ENCODE measurements at regions of chr6 and their contacts with region 1.

Region 1: DNA sequence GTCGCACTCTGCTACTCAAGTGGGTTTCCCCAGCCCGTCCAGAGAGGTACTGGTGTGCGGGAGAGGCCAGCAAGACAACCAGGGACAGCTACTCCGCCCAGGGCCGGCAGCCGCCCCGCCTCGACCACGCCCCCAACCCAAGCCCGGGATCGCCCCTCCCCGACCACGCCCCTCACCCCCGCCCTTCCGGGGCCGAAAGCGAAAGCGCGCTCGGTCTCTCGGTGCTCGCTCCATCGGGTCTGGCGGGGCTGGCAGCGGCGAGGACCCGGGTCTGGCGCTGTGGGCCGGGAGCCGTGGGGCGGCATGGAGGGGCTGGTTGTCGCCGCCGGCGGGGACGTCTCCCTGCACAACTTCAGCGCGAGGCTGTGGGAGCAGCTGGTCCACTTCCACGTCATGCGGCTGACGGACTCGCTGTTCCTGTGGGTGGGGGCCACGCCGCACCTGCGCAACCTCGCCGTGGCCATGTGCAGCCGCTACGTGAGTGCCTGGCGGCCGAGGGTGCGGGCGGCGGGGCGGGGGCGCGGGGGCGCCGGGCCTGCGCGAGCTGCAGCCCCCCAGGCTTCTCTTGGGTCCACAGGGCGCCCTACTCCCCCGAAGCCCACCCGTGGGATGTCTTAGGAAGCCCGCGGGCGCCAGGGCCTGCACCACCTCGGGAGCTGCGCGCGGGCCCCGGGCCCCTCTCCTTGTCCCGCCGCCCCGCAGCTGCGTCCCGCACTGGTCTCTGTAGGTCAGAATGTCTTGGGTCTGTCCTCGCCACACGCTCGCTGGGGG is at the start of gene PSMG4:
- DNase-seq: peak; percentile 91
- H3K4me3 Mint-ChIP-seq: peak within 1 kb of the TSS; percentile 99
- H3K27ac Mint-ChIP-seq: peak within 1 kb of the TSS; percentile 95
- H3K4me1 Mint-ChIP-seq: peaks cover 39% of the 10 kb centered on the region
- H3K27me3 Mint-ChIP-seq: peaks cover 11% of the 10 kb centered on the region
- total RNA-seq, gene PSMG4: 32.1 and 35.4 TPM in 2 replicates

Region 2: GRCh38 chr6:2999618-3000557 is 259.0 kb before region 1 on chr6 and contains the start of gene NQO2:
- intact Hi-C with region 1: loop called (anchors 1 kb)
- DNase-seq: peak; percentile 83
- H3K4me3 Mint-ChIP-seq: peak within 1 kb of the TSS; percentile 90
- H3K27ac Mint-ChIP-seq: peak within 1 kb of the TSS; percentile 90
- H3K4me1 Mint-ChIP-seq: peaks cover 38% of the 10 kb centered on the region
- H3K27me3 Mint-ChIP-seq: peaks cover 3% of the 10 kb centered on the region
- total RNA-seq, gene NQO2: 30.2 and 34.8 TPM in 2 replicates

Region 3: GRCh38 chr6:3125815-3126214 is 133.1 kb before region 1 on chr6:
- intact Hi-C with region 1: loop called (anchors 1 kb)
- DNase-seq: no peak
- H3K4me3 Mint-ChIP-seq: no peak overlapping the region
- H3K27ac Mint-ChIP-seq: no peak overlapping the region
- H3K4me1 Mint-ChIP-seq: no peaks in the 10 kb centered on the region
- H3K27me3 Mint-ChIP-seq: no peaks in the 10 kb centered on the region

Region 4: DNA sequence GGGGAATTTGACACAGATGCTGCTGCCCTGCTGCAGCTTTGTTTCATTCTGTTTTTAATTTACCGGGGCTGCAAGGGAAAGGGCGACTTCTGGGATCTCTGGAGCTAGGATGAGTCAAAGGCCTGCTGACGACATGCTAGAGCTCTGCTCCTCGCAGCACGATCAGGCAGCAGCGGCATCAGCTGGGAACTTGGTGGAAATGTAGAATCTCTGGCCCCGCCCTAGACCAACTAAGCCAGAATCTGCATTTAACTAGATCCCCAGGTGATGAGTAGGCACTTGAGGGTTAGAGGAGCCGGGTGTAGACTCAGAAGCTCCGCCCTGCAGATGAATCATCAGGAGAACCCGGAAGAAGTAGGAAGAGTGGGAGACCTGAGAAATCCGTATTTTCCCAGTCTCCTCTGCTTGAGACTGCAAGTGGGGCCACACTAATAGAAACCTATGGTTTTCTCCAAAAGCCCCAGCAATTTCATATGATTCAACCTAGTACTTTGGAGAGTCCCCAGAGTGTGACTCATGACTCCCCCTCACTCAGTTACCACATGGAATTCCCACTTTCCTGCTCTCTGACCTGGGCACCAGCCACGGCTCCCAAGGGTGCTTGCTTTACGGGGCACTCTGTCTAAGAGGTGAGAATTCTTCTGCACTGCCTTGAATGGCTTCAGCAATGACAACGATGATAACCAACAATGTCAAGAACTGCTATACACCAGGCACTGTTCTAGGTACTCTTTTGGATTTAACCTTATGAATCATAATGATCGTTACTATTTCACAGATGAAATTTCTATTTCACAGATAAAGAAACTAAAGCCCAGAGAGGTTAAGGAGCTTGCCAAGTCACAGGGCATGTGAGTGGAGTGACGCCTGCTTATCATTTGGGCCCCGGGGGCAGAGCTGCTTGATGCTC is 49.5 kb before region 1 on chr6:
- intact Hi-C with region 1: loop called (anchors 1 kb)
- DNase-seq: no peak
- H3K4me3 Mint-ChIP-seq: peak overlapping the region; percentile 43
- H3K27ac Mint-ChIP-seq: peak overlapping the region; percentile 89
- H3K4me1 Mint-ChIP-seq: peaks cover 41% of the 10 kb centered on the region
- H3K27me3 Mint-ChIP-seq: peaks cover 23% of the 10 kb centered on the region

Region 5: GRCh38 chr6:3341467-3341866 is 82.6 kb after region 1 on chr6:
- intact Hi-C with region 1: no loop called
- DNase-seq: no peak
- H3K4me3 Mint-ChIP-seq: no peak overlapping the region
- H3K27ac Mint-ChIP-seq: no peak overlapping the region
- H3K4me1 Mint-ChIP-seq: peaks cover 13% of the 10 kb centered on the region
- H3K27me3 Mint-ChIP-seq: peaks cover 10% of the 10 kb centered on the region

Region 6: GRCh38 chr6:3456755-3457466 is 198.0 kb after region 1 on chr6 and contains the start of gene SLC22A23:
- intact Hi-C with region 1: loop called (anchors 1 kb)
- DNase-seq: peak; percentile 42
- H3K4me3 Mint-ChIP-seq: peak within 1 kb of the TSS; percentile 81
- H3K27ac Mint-ChIP-seq: peak within 1 kb of the TSS; percentile 70
- H3K4me1 Mint-ChIP-seq: peaks cover 7% of the 10 kb centered on the region
- H3K27me3 Mint-ChIP-seq: peaks cover 46% of the 10 kb centered on the region
- total RNA-seq, gene SLC22A23: 0.05 and 0.39 TPM in 2 replicates

Region 7: DNA sequence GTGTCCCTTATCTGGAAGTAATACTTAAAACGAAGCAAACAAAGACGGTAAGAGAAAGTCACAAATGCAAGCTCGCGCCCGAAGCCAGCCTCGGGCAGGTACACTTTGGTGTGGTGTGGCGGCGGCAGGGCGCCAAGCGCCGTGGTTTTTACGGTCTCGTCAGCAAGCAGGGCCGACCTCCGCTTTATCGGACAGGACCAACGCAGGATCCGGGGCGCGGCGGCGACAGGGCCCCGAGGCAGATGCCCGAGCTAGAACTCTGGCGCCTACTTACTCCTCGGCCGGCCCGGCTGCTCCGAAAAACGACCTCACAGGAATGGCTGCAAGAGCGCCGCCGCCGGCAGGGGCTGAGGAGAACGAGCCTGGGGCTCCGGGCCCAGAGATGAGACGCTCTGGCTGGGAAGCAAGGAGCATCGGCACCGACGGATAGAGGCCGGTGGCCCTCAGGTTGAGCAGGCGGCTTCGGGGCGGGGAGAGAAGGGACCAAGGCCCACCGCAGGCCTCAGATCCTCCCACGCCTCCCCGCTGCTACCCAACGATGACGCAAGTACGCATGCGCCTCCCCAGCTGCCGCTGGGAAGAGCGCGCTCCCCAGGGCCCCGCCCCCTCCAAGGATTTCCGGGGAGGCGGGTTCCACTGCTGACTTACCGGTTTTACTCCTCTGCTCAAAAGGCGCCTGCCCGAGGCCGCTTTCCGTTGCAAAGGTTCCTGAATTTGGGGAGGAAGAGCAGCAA is 759.4 kb after region 1 on chr6:
- intact Hi-C with region 1: loop called (anchors 2 kb)
- DNase-seq: peak; percentile 96
- H3K4me3 Mint-ChIP-seq: peak overlapping the region; percentile 99
- H3K27ac Mint-ChIP-seq: peak overlapping the region; percentile 100
- H3K4me1 Mint-ChIP-seq: peaks cover 60% of the 10 kb centered on the region
- H3K27me3 Mint-ChIP-seq: no peaks in the 10 kb centered on the region

Measured in activated T-helper 1 cell treated with anti-CD3 and anti-CD28 coated beads, Interleukin-12 subunit alpha, Interleukin-12 subunit beta, Interleukin-2, Interleukin-4 antibody, amounts not matched to agents 30 ng/mL and 10 ng/mL and 1 ng/mL, durations not matched to agents 14 hours and 24 hours and 36 hours (primary cell).